Posterior cingulate gyrus (tissue), 11 donors: ENCODE measurements at regions of chr17 and their contacts with region 1.

Region 1: GRCh38 chr17:67376737-67377487 is at the start of gene PITPNC1:
- DNase-seq: peak; percentile 73 to 97 (median 89)

Region 2: DNA sequence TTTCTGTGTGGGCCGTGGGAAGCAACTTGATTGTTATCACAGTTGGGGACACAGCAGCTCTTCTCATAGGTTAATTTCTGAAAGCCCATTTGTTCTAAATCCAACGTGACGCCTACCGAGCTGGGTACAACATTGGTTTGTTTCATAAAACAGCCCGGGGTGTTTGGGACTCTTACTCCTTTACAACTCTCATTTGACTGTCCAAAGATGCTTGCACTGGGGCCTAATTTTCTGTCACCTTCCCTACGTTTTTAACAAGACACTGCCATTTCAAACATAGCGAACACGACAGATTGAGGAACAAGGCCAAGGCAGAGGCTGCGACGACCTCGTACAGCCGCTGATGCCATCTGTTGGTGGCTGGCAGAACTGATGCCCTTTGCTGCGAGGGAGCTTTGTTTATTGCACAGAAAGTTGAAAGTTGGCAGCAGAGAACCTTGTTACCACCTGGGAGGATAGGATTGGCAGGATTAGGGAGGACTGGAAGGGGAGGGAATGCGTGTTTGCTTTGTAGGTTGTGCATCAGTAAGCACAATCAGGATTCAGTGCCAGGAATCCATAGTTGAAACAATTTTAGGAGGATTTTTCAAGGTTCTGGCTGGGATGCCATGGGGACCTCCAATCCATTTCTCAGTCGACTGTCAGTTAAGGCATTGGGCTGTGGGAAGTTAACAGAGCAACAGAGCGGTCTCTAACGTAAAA is 98.5 kb after region 1 on chr17:
- intact Hi-C with region 1: loop called (anchors 1 kb)
- DNase-seq: peak; percentile 65 to 97 (median 80)

Region 3: DNA sequence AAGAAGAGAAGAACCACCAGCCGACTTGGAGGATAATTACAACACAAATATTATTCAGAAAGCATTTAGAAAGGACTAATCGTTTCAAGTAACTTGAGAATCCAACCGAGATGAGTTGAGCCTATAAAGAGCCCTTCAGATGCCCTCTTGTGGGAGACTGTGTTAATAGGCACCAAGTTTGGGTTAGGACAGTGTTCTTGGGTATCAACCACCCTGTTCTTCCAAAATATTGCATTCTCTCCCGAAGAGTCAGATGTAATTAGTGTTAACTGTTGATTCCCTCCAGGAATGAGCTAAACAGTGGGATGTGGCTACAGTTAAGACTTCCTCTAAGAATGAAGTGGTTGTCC is 253.0 kb after region 1 on chr17:
- intact Hi-C with region 1: loop called (anchors 10 kb)
- DNase-seq: no peak

Region 4: GRCh38 chr17:67689534-67690177 is 312.7 kb after region 1 on chr17:
- intact Hi-C with region 1: loop called (anchors 1 kb)
- DNase-seq: peak in 2 of 10 donors; percentile 17 to 31

Region 5: DNA sequence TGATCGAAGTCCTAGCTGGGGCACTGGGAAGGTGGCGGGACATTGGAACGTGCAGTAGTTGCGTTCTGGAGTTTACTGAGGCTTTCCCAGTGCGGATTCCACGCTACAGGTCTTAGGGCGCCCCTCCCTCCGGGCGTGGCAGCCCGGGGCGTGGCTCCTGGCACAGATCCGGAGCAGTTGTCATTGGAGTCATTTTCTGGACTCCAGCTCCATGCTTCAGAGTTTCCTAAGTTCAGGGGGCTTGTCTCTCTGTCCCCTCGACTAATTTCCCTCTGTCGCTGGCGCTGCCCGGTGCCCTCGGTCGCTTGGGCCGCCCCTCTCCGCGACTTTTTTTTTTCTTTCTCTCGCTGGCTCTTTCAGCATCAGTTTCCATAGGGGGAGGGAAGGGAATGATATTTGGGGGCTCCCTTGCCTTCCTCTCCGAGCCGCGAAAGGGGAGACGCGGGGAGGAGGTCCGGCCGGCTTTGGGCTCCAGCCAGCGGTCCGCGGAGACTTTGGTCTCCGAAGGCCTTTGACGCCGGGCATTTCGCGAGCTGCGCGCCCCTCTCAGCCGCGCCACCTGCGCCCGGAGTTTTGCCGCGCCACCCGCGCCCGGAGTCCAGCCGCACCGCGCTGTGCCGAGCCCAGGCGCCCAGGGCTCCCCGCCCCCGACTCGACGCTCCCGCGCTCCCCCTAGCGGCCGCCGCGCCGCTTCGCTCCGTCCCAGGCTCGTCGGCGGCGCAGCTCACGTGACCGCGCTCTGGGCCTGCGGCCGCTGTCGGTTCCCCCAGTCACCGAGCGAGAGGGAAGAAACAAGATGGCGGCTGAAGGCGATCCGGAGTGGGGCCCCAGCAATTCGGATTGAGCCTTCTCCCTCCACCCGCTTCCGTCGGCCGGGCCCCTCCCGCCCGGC is 448.1 kb after region 1 on chr17 and contains the start of gene BPTF:
- intact Hi-C with region 1: loop called (anchors 10 kb)
- DNase-seq: peak; percentile 85 to 98 (median 89)